Common myeloid progenitor, CD34-positive (primary cell): ENCODE measurements at regions of chr17 and their contacts with region 1.

Region 1: GRCh38 chr17:75614006-75614405 is 19.2 kb upstream of the SMIM5 start:
- DNase-seq: no peak
- H3K4me3 ChIP-seq: no peak overlapping the region
- H3K27ac ChIP-seq: no peak overlapping the region
- H3K4me1 ChIP-seq: no peaks in the 10 kb centered on the region
- H3K27me3 ChIP-seq: no peaks in the 10 kb centered on the region

Region 2: GRCh38 chr17:75625813-75626486 is 11.9 kb after region 1 on chr17:
- CTCF ChIA-PET with region 1: interaction called, 26 read pairs
- POLR2A ChIA-PET with region 1: no interaction called
- DNase-seq: peak in 2 of 3 donors; percentile 50 to 51
- H3K4me3 ChIP-seq: no peak overlapping the region
- H3K27ac ChIP-seq: no peak overlapping the region
- H3K4me1 ChIP-seq: peaks cover 0 to 2% (median 0%) of the 10 kb centered on the region in 4 experiments
- H3K27me3 ChIP-seq: no peaks in the 10 kb centered on the region

Region 3: DNA sequence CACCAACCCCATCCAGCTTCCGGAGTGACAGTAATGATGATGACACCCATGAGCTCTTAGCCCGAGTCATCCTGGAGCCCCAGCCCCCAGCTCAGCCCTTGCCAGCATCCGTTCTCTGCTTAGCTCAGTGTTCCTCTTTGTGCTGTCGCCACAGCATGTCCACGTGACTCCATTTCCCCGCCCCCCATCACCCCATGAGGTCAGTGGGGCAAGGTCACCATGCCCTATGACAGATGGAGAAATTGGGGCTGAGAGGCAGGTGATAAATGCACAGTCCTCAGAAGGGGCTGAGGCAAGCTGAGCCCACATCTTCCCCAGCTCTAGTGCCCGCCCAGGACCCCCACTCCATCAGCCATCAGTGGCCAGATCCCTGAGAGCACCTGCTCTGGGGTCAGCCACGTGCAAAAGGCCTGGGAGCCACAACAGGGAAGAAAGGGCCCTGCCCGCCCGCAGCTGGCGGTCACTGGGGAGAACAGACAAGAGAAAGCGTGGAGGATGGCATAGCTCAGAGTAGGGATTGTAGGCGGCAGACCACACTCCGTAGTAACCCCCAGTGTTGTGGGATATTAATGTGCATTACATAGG is 124.3 kb after region 1 on chr17:
- CTCF ChIA-PET with region 1: no interaction called
- POLR2A ChIA-PET with region 1: no interaction called
- DNase-seq: peak in 2 of 3 donors; percentile 56 to 62
- H3K4me3 ChIP-seq: no peak overlapping the region
- H3K27ac ChIP-seq: no peak overlapping the region
- H3K4me1 ChIP-seq: peaks cover 0 to 11% (median 6%) of the 10 kb centered on the region in 4 experiments
- H3K27me3 ChIP-seq: no peaks in the 10 kb centered on the region